Dorsolateral prefrontal cortex (tissue), 120 donors: ENCODE measurements at regions of chr3 and their contacts with region 1.

Region 1: GRCh38 chr3:169668957-169669681 is 5.6 kb upstream of the MECOM start:
- DNase-seq: peak in 7 of 10 donors; percentile 41 to 75 (median 46)
- H3K4me3 ChIP-seq: peak overlapping the region in 58 of 59 donors; percentile 5 to 70 (median 43)
- H3K27ac ChIP-seq: peak overlapping the region in 8 of 59 donors; percentile 3 to 53 (median 20)
- H3K27me3 ChIP-seq: peaks cover 28 to 98% (median 81%) of the 10 kb centered on the region in 45 donors
- CTCF ChIP-seq: peak in 55 of 56 donors; percentile 39 to 85 (median 64)

Region 2: GRCh38 chr3:168476360-168476980 is 1192.6 kb before region 1 on chr3:
- intact Hi-C with region 1: no loop called
- DNase-seq: no peak
- H3K4me3 ChIP-seq: no peak overlapping the region
- H3K27ac ChIP-seq: no peak overlapping the region
- H3K27me3 ChIP-seq: peaks cover 0 to 9% (median 0%) of the 10 kb centered on the region in 45 donors
- CTCF ChIP-seq: no peak

Region 3: GRCh38 chr3:168865022-168865551 is 804.0 kb before region 1 on chr3:
- intact Hi-C with region 1: loop called in 1 of 2 experiments (anchors 10 kb)
- DNase-seq: no peak
- H3K4me3 ChIP-seq: no peak overlapping the region
- H3K27ac ChIP-seq: no peak overlapping the region
- H3K27me3 ChIP-seq: peaks cover 0 to 17% (median 0%) of the 10 kb centered on the region in 45 donors
- CTCF ChIP-seq: peak; percentile 57 to 81 (median 71)

Region 4: GRCh38 chr3:169227911-169228310 is 441.2 kb before region 1 on chr3:
- intact Hi-C with region 1: loop called in 1 of 2 experiments (anchors 10 kb)
- DNase-seq: no peak
- H3K4me3 ChIP-seq: no peak overlapping the region
- H3K27ac ChIP-seq: no peak overlapping the region
- H3K27me3 ChIP-seq: peaks cover 0 to 9% (median 0%) of the 10 kb centered on the region in 45 donors
- CTCF ChIP-seq: no peak

Region 5: GRCh38 chr3:169278092-169278491 is 391.0 kb before region 1 on chr3:
- intact Hi-C with region 1: no loop called
- DNase-seq: no peak
- H3K4me3 ChIP-seq: no peak overlapping the region
- H3K27ac ChIP-seq: no peak overlapping the region
- H3K27me3 ChIP-seq: no peaks in the 10 kb centered on the region
- CTCF ChIP-seq: no peak